ENCODE measurements at regions of chr19 and their contacts with region 1.

Region 1: GRCh38 chr19:15432629-15433518 is 14.1 kb upstream of the AKAP8L start:
- DNase-seq: peak; percentile 72
- H3K4me3 ChIP-seq: peak overlapping the region; percentile 64
- H3K27ac ChIP-seq: peak overlapping the region; percentile 94
- H3K27me3 ChIP-seq: no peaks in the 10 kb centered on the region
- CTCF ChIP-seq: no peak

Region 2: GRCh38 chr19:15265850-15266248 is 167.0 kb before region 1 on chr19:
- CTCF ChIA-PET with region 1: interaction called, 3 read pairs
- POLR2A ChIA-PET with region 1: interaction called, 10 read pairs
- DNase-seq: peak; percentile 96
- H3K4me3 ChIP-seq: no peak overlapping the region
- H3K27ac ChIP-seq: peak overlapping the region; percentile 63
- H3K27me3 ChIP-seq: no peaks in the 10 kb centered on the region
- CTCF ChIP-seq: no peak